CD8-positive, alpha-beta memory T cell (primary cell): ENCODE measurements at regions of chr2 and their contacts with region 1.

Region 1: GRCh38 chr2:28594289-28595108 is 98.6 kb downstream of the PLB1 start:
- DNase-seq: peak; percentile 69 to 88 (median 79)
- H3K4me3 ChIP-seq: peak overlapping the region; percentile 16
- H3K4me3 Mint-ChIP-seq: peak overlapping the region; percentile 4 to 76 (median 66)
- H3K27ac ChIP-seq: peak overlapping the region; percentile 25
- H3K27ac Mint-ChIP-seq: peak overlapping the region; percentile 52 to 96 (median 92)
- H3K4me1 ChIP-seq: peaks cover 17% of the 10 kb centered on the region
- H3K4me1 Mint-ChIP-seq: peaks cover 10 to 15% (median 14%) of the 10 kb centered on the region in 3 donors
- H3K27me3 ChIP-seq: no peaks in the 10 kb centered on the region
- H3K27me3 Mint-ChIP-seq: peaks cover 6 to 9% of the 10 kb centered on the region in 2 donors

Region 2: DNA sequence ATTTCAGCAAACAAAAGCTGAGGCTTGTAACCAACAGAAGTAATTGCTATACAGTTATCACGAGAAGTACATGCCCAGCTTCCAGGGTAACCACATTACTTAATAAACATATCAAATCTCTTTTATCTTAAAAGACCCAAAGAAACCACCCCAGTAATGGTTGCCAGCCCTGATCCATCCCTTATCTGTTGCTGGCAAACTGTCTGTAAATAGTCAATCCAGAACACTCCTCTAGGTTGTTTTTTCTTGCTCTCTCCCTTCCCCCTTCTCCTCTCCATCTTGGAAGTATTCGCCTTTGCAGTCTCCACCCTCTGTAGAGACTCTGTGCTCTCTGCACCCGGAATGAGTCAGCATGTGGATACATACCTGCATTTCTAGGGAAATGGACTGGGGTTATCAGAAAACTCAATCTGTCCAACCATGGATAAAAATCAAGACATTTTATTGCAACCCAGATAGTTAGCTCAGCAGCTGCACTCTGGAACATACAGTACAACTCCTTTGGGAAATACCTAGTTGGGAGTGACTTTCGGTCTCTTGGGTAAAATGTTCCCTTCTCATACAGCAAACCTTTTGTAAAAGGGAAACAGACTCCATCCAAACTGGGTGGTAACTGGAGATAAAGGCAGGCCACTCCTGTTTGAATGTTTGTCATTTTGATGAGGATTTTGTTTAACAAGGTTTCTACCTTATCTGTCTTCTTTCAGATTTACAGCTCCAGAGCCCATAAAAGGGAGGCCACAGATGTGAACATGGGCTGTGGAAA is 325.3 kb before region 1 on chr2:
- CTCF ChIA-PET with region 1: no interaction called
- POLR2A ChIA-PET with region 1: no interaction called
- DNase-seq: no peak
- H3K4me3 ChIP-seq: no peak overlapping the region
- H3K4me3 Mint-ChIP-seq: no peak overlapping the region
- H3K27ac ChIP-seq: no peak overlapping the region
- H3K27ac Mint-ChIP-seq: peak overlapping the region in 2 of 8 donors; percentile 22 to 42
- H3K4me1 ChIP-seq: peaks cover 10% of the 10 kb centered on the region
- H3K4me1 Mint-ChIP-seq: peaks cover 30 to 44% (median 40%) of the 10 kb centered on the region in 3 donors
- H3K27me3 ChIP-seq: no peaks in the 10 kb centered on the region
- H3K27me3 Mint-ChIP-seq: no peaks in the 10 kb centered on the region

Region 3: DNA sequence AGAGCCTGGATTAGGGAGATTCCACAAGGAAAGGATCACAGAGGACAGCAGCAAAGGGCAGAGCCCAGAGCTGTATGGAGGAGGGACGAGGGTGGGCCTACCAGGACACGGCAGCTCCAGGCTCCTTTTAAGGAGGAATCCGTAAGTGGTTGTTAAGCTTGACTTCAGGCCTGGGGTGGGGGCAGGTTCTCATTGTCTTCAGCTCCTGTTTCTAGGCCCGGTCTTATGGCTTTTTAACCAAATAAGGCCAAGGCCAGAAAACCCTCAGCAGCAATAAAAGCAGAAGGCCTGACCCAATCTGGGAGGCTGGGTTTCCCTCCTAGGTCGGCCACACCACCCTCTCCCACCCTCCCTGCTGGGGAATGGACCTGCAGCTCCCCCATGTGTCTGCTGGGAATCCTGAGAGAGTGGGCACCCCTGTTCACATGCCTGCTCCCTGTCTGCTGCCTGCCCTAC is 12.5 kb after region 1 on chr2:
- CTCF ChIA-PET with region 1: interaction called, 41 read pairs
- POLR2A ChIA-PET with region 1: no interaction called
- DNase-seq: no peak
- H3K4me3 ChIP-seq: no peak overlapping the region
- H3K4me3 Mint-ChIP-seq: no peak overlapping the region
- H3K27ac ChIP-seq: no peak overlapping the region
- H3K27ac Mint-ChIP-seq: peak overlapping the region in 1 of 8 donors; percentile 30
- H3K4me1 ChIP-seq: peaks cover under 1% of the 10 kb centered on the region
- H3K4me1 Mint-ChIP-seq: peaks cover 2 to 19% (median 12%) of the 10 kb centered on the region in 3 donors
- H3K27me3 ChIP-seq: no peaks in the 10 kb centered on the region
- H3K27me3 Mint-ChIP-seq: peaks cover 1 to 4% of the 10 kb centered on the region in 2 donors

Region 4: GRCh38 chr2:28621172-28622100 is 26.9 kb after region 1 on chr2:
- CTCF ChIA-PET with region 1: interaction called, 50 read pairs
- POLR2A ChIA-PET with region 1: interaction called, 4 read pairs
- DNase-seq: peak; percentile 59 to 93 (median 90)
- H3K4me3 ChIP-seq: peak overlapping the region; percentile 53
- H3K4me3 Mint-ChIP-seq: peak overlapping the region; percentile 25 to 90 (median 73)
- H3K27ac ChIP-seq: peak overlapping the region; percentile 95
- H3K27ac Mint-ChIP-seq: peak overlapping the region; percentile 96 to 100 (median 99)
- H3K4me1 ChIP-seq: peaks cover 92% of the 10 kb centered on the region
- H3K4me1 Mint-ChIP-seq: peaks cover 73 to 95% (median 77%) of the 10 kb centered on the region in 3 donors
- H3K27me3 ChIP-seq: no peaks in the 10 kb centered on the region
- H3K27me3 Mint-ChIP-seq: no peaks in the 10 kb centered on the region

Region 5: GRCh38 chr2:28751252-28751955 is 156.9 kb after region 1 on chr2 and contains the start of gene PPP1CB:
- CTCF ChIA-PET with region 1: interaction called, 70 read pairs
- POLR2A ChIA-PET with region 1: interaction called, 21 read pairs
- DNase-seq: peak; percentile 95 to 99 (median 98)
- H3K4me3 ChIP-seq: peak within 1 kb of the TSS; percentile 95
- H3K4me3 Mint-ChIP-seq: peak within 1 kb of the TSS; percentile 91 to 99 (median 96)
- H3K27ac ChIP-seq: peak within 1 kb of the TSS; percentile 99
- H3K27ac Mint-ChIP-seq: peak within 1 kb of the TSS; percentile 93 to 100 (median 99)
- H3K4me1 ChIP-seq: peaks cover 60% of the 10 kb centered on the region
- H3K4me1 Mint-ChIP-seq: peaks cover 51 to 72% (median 70%) of the 10 kb centered on the region in 3 donors
- H3K27me3 ChIP-seq: no peaks in the 10 kb centered on the region
- H3K27me3 Mint-ChIP-seq: no peaks in the 10 kb centered on the region
- total RNA-seq, gene PPP1CB: 208 to 214 TPM